HAP-1 (cell line): ENCODE measurements at regions of chr10 and their contacts with region 1.

Region 1: GRCh38 chr10:69639291-69640195 is 9.5 kb downstream of the FAM241B start:
- DNase-seq: peak; percentile 43 to 77
- H3K4me3 ChIP-seq: no peak overlapping the region
- H3K4me1 ChIP-seq: no peaks in the 10 kb centered on the region
- H3K27me3 ChIP-seq: no peaks in the 10 kb centered on the region

Region 2: DNA sequence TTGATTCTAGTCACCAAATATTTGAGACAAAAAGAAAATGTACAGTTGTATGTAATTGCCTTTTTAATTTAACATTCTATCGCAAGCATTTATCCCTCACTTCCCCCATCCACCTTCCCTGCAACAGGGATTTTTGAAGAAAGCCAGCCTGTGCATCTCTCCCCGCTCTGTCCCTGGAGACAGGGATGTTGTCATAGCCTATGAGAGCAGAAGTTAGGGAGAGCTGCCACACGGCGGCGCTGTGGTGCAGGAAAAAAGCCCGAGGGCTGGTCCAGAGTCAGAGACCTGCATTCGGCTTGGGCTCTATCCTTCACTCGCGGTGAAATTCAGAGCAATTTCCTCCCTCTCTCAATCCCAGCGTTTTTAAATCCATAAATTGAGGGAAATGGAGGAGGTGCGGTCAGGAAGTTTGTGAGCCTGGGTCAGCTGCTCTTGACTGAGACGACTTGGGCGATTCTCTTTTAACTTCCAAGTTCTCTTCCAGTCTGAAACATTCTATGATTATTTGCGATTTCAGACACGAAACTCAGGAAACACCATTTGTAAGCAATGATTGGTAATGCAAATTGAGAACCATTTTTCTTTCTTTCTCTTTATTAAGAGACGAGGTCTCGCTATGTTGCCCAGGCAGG is 401.9 kb before region 1 on chr10:
- in situ Hi-C with region 1: loop called (anchors 25 kb)
- DNase-seq: peak; percentile 62 to 91
- H3K4me3 ChIP-seq: no peak overlapping the region
- H3K4me1 ChIP-seq: peaks cover 3% of the 10 kb centered on the region
- H3K27me3 ChIP-seq: no peaks in the 10 kb centered on the region

Region 3: DNA sequence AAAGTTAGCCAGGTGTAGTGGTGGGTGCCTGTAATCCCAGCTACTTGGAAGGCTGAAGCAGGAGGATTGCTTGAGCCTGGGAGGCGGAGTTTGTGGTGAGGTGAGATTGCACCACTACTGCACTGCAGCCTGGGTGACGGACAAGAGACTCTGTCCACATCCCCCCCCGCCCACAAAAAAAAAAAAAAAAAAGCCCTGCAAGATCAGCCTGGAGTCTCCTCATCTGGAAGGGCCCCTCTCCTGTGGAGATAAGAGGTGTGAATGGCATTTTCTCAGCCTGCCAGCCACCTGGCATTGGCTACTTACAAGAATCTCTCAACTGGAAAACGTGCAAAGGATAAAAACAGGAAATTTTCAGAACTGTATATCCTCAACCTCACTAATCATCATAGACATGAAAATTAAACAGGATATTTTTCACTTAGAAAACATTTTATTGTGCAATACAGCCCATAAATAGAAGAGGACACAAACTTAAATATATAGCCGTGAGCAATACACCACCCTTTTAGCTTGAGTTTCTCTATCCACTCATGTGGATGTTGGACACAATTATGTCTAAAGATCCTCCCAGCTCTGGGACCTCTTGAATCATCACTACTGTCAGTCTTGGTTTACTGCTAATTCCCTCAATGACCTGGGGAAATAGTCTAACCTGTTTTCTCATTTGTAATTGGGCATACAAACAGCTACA is 199.6 kb before region 1 on chr10:
- in situ Hi-C with region 1: loop called (anchors 10 kb)
- DNase-seq: no peak
- H3K4me3 ChIP-seq: no peak overlapping the region
- H3K4me1 ChIP-seq: peaks cover 12% of the 10 kb centered on the region
- H3K27me3 ChIP-seq: no peaks in the 10 kb centered on the region

Region 4: GRCh38 chr10:69515699-69516259 is 123.8 kb before region 1 on chr10:
- in situ Hi-C with region 1: loop called (anchors 5 kb)
- DNase-seq: peak; percentile 78 to 86
- H3K4me3 ChIP-seq: no peak overlapping the region
- H3K4me1 ChIP-seq: no peaks in the 10 kb centered on the region
- H3K27me3 ChIP-seq: no peaks in the 10 kb centered on the region

Region 5: DNA sequence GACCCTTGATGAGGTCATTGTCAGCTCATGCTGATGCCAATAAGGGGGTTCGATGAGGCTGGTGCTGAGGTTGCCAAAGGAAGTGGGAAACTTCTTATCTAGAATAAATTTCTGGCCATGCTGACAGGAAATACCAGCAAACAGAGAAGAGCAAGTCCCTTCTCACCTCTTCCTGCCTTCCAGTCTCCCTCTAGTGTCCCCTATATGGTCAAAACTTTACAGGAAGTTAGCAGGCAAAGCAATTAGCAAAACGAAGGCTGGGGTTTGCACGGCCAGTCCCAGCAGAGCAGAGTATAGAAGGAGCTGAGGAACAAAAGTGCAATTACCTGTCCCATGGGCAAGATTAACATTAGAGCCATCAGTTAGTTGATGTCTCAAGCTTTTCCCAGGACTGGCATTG is 51.2 kb before region 1 on chr10:
- in situ Hi-C with region 1: no loop called
- DNase-seq: no peak
- H3K4me3 ChIP-seq: no peak overlapping the region
- H3K4me1 ChIP-seq: no peaks in the 10 kb centered on the region
- H3K27me3 ChIP-seq: 0 out of 2 replicates have a peak, but pooled peaks cover 2% of the 10 kb centered on the region

Region 6: DNA sequence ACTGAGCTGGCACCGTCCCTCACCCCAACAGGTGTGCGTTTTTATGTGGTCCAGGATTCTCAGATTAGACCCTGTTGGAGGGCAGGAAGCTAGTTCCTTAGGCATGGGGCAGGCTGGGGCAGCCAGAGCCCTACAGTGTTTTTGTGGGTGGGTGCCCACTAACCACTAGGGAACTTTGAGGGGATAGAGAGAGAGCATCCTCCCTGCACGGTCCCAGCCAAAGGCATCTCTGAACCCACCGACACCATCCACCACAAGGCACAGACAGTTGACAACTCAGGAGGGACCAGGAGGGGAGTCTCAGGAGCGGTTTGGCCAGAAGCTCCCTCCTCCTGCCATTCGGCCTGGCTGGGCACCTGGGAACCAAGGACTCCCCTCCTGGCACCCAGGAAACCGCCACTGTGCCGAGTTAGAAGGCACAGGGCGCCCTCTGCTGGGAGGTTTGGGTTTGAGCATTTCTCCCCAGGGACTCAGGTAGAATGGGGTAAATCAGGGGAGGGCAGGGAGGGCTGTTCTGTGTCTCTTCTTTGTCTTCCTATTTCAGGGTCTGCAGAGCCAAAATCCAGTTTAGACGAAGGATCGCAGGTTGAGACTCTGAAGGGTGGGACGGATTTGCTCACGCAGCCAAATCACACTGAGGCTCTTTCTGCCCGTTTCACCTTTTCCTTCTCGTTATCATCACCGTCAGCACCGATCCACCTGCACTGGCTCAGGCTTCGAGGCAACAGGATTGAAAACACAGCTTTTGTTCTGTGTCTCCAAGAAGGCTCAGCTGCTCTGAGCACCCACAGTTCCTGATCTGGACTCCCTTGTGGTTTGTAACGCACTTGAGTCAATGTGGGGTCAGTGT is 77.4 kb after region 1 on chr10:
- in situ Hi-C with region 1: loop called (anchors 5 kb)
- DNase-seq: peak; percentile 11 to 80
- H3K4me3 ChIP-seq: no peak overlapping the region
- H3K4me1 ChIP-seq: no peaks in the 10 kb centered on the region
- H3K27me3 ChIP-seq: no peaks in the 10 kb centered on the region

Region 7: GRCh38 chr10:69774596-69774995 is 135.1 kb after region 1 on chr10:
- in situ Hi-C with region 1: no loop called
- DNase-seq: no peak
- H3K4me3 ChIP-seq: no peak overlapping the region
- H3K4me1 ChIP-seq: no peaks in the 10 kb centered on the region
- H3K27me3 ChIP-seq: no peaks in the 10 kb centered on the region

Region 8: DNA sequence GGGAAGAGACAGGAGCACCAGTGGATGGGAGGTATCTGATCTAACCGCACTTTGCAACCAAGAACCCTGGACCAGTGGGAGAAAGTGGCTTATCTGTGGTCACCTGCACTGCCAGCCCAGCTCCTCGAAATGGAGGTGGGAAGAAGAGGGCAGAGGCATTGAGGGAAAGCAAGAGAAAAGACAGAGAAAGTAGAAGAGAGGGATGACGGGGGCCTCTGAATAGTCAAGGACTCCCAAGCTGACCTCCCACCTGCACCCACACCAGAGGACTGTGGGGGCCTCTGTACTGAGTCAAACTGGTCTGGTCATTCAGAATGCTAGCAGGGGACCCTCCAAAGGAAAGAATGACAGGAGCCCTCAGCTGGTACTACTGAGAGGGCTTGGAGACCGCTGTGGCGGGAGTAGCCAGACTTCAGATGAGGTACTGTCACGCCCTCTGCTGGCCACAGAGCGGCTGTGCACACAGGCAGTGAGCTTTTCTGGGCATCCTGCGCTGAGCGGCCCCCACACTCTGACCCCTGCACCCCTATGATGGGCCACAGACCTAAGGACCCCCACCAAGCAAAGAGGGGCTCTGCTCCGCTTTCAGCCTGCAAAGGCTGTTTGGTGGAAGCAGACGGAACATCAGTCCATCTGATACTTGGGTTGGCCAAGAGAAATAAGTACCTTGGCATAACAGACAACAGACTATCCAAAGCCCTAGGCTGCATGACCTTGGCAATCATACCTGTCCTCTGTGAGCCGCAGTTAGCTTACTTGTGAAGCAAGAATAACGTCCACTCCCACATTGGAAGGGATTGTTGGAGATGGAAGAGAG is 275.1 kb after region 1 on chr10:
- in situ Hi-C with region 1: loop called (anchors 10 kb)
- DNase-seq: peak; percentile 45 to 80
- H3K4me3 ChIP-seq: no peak overlapping the region
- H3K4me1 ChIP-seq: no peaks in the 10 kb centered on the region
- H3K27me3 ChIP-seq: no peaks in the 10 kb centered on the region; the same call in 1 of the 2 replicates